ENCODE measurements at regions of chr22 and their contacts with region 1.

Region 1: DNA sequence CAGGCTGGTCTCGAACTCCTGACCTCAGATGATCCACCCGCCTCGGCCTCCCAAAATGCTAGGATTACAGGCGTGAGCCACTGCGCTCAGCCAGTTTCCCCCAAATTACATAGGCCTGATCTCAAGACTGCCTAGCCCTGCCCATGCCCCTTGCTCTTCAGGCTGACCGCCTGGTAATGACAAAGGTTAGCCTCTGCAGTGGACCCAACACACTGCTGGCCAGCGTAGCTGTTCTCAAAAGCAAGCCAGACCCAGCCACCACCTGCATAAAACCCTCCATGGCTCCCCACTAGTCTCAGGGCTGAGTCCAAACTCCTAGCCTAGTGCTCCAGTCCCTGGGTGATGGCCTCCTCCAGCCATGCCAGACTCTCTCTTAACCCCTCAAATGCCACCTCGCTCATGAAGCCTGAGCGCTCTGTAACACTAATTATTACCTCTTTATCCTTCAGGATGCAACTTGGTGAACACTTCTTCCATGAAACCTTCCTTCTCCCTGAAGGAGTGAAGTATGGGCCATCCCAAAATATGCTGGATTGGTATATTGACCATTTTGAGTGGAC is 836 bp upstream of the RSPH14 start:
- DNase-seq: peak in 1 of 42 donors; percentile 5

Region 2: DNA sequence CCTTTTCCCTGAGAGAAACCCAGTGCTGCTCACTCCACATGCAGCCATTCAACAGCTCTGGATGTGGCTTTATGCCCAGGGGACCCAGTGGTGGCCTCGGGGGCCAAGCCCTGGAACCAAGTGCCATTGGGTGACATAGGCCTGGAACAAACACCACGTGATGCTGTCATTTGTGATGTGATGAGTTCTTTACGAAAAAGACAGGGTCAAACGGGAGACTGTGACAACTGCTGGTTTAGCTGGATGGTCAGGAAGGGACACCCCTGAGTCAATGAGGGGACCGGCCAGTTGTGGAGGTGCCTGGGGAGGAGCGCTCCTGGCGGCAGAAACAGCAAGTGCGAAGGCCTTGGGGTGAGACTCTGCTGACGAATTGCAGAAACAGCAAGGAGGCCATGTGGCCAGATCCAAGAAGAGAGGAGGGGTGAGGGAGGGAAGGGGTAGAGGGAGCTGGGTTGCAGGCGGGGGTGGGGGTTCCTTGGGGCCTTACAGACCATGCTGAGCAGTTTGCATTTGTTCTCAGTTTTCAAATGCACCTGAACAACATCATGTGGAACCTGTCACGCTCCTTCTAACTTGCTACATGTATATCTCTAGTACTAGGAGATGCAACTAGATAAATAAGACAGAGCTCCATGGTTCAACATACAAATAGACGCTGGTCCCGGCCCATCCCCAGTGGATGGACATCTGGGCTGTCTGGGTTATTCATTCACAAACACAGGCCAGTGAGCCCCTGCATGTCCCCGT is 198.9 kb before region 1 on chr22:
- intact Hi-C with region 1: no loop called
- DNase-seq: peak in 14 of 42 donors; percentile 1 to 37 (median 8)

Region 3: DNA sequence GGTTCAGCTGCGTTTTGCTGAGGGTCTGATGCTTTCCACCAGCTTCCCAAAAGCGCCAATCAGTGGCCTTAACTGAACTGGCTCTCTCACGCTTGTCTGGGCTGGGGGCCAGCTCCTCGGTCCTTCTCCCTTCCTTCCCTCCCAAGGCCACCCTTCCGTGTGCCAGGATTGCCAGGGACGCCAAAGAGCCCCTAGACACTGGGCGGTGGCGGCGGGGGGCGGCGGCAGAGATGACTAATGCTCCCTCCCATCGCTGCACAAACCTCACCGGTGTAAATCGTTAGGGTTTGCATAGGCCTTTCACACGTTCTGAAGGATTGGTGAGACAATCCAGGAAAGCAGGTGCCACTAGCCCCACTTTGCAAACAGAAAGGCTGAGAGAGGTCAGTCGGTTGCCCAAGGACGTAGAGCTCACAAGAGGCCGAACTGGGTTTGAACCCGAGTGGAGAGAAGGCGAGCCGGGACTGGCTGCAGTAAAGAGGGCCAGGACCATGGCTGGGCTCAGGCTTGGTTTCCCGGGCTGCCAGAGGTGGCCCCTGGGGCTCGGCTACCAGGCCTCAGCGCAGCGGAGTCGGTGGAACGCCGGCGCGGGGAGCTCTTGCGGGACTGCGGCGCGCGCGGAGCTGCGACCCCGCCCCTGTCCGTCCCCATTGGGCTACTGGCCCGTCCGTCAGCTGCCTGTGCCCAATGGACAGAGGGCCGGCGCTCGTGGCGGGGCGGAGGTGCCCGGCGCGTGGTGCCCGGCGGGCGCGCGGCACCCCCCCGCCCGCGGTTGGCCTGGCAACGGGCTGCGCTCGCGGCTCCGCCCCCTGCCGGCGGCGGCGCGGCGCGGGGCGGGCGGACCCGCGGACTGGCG is 72.9 kb before region 1 on chr22:
- intact Hi-C with region 1: loop called (anchors 2 kb)
- DNase-seq: peak; percentile 87 to 98 (median 96)

Region 4: DNA sequence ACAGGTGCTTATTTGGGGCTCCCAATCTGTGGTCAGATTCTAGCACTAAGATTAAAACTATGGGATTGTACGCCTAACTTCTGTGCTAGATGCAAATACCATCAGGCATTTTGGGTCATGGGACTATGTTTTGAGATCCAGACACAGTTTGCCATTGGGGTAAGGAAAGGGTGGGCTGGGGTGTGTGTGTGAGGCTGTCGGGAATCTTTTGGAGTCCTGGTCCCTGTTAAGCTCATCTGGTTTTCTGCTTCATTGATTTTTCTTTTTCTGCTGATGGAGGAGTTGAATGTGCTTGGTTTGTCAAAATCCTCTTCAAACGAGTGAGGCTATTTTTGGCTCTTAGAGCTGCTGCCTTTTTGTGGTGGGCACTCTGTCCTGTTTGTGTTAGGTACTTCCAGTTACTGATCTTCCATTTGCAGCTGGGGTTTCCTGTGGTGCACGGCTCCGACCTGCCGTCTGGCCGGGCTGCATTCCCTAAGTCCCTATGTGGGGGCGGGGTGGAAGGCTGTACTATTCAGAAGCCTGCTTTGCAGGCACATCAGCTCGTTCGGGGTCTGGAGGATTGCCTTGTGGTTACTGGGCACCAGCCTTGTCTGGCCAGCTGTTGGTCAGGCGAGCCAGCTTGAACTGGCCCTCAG is 40.6 kb after region 1 on chr22:
- intact Hi-C with region 1: no loop called
- DNase-seq: peak; percentile 48 to 90 (median 75)